Endothelial cell of umbilical vein (primary cell): ENCODE measurements at regions of chr1 and their contacts with region 1.

Region 1: DNA sequence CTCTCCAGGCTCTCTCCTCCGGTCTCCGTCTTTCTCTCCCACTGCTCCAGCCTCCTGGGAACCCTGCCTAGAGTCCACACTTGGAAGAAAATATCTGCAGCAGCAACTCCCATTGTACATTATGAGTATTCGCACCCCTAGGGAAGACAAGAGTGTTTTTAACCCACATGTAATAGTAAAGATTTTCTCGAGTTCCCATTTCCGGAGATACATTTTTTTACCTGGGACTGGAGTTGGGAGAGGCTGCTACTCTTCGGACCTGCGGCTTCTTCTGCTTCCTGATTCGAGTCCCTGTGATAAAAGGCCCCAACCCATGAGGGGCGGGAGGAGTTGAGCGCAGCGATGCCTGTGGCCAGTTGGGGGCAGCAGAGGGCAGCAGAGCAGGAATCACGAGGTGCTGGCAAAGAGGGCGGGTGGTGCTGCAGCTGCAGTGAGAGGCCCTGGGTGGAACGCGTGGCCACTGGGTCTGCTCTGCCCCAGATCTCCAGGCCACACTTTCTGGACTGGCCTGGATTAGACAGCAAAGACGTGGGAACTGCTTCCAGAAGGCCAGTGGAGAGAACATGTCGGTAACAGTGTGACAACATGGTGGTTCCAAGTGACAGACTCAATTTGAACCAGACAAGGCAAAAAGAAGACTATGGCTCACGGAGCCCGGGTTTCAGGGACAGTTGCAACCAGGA is 221.0 kb upstream of the CSF3R start:
- DNase-seq: peak; percentile 73
- H3K4me3 ChIP-seq: no peak overlapping the region
- H3K27ac ChIP-seq: no peak overlapping the region
- H3K4me1 ChIP-seq: no peaks in the 10 kb centered on the region
- H3K27me3 ChIP-seq: no peaks in the 10 kb centered on the region
- CTCF ChIP-seq: peak; percentile 92 to 98
- POLR2A ChIP-seq: no peak

Region 2: DNA sequence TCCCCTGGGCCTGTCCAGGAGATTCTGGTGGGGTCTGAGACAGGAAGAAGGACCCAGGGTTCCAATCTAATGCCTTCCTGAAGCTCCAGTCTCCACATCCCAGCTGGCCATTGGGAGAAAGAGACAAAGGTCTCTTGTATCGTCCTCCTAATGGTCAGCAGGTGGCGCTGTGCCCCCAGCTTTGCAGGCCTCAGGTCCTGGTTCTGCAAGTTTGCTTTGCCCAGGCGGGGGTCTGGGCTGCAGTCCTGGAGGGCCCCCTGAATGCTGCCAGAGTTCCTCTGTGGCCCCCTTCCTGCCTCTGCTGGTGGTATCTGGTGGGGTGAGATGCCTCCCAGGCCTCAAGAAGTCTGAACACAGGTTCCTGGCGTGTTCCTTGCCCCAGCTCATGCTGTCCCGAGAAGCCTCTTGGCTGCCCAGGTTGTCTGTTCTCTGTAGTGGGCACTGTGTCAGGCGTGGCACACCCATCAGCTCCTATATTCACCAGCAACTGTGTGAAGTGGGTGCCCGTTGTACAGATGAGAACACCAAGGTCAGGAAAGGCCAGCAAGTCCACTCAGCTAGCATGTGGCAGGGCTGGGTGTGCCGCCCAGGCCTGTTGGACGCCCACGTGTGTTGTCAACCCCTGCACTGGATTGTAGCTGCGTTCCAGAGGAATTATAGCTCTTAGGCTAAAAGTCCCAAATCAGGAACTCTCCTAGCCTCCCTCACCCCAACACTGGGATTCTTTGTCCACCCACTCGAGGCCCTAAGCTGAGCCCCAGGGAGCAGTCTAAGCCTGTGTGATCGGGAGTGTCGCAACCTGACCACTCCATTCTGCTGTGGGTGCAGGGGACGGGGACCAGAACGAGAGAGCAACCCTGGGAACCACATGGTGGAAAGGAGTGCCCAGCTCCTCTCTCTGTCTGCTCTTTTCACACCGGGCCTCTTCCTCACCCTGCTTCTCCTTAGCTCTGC is 187.0 kb before region 1 on chr1:
- CTCF ChIA-PET with region 1: no interaction called
- POLR2A ChIA-PET with region 1: no interaction called
- dilution Hi-C with region 1: no loop called
- intact Hi-C with region 1: loop called (anchors 5 kb)
- DNase-seq: peak; percentile 43
- H3K4me3 ChIP-seq: no peak overlapping the region
- H3K27ac ChIP-seq: no peak overlapping the region
- H3K4me1 ChIP-seq: no peaks in the 10 kb centered on the region
- H3K27me3 ChIP-seq: peaks cover 0 to 1% of the 10 kb centered on the region in 2 experiments
- CTCF ChIP-seq: peak; percentile 85 to 90
- POLR2A ChIP-seq: no peak

Region 3: DNA sequence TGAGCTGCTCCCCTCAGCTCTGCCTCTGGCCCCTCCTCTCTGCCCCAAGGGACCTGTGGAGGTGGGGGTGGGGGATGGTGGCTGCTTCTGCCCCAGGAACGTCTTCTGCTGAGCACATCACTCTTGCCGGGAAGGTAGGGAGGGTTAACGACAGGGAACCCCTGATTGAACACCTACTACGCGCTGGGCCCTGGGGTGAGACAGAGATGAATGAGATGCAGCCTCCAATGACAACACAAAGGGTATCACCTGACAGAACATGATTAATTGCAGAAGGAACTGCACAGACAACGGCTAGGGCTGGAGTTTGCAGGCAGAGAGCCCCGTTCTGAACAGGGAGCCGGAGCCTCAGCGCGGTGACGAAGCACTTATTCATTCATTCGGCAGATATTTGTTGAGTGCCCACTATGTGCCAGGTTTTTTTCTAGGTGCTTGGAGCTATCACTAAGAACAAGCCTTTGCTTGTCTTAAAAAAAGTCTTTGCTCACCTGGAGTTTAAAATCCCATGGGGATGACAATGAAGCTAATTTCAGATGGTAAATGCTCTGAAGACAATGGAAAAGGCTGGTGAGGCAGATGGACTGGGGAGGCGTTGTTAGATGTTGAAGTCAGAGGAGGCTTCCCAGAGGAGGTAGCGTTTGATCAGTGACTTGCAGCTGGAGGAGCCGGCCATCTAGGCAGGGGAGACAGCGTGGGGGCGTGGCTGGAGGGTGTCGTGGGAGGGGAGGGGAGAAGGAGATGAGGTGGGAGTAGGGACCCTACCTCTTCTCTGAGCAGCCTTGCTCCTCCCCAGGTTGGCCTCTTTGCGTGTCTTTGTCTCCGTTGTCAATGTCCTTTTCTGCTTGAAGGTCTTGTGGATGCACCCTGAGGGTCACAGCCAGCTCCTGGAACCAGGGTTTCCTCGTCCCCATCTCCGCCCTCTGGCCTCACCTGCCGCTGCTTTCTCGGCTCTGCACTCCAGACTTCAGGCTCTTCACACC is 117.8 kb before region 1 on chr1:
- CTCF ChIA-PET with region 1: no interaction called
- POLR2A ChIA-PET with region 1: no interaction called
- dilution Hi-C with region 1: no loop called
- intact Hi-C with region 1: no loop called
- DNase-seq: no peak
- H3K4me3 ChIP-seq: no peak overlapping the region
- H3K27ac ChIP-seq: no peak overlapping the region
- H3K4me1 ChIP-seq: no peaks in the 10 kb centered on the region
- H3K27me3 ChIP-seq: peaks cover 0 to 6% of the 10 kb centered on the region in 2 experiments
- CTCF ChIP-seq: no peak
- POLR2A ChIP-seq: no peak

Region 4: DNA sequence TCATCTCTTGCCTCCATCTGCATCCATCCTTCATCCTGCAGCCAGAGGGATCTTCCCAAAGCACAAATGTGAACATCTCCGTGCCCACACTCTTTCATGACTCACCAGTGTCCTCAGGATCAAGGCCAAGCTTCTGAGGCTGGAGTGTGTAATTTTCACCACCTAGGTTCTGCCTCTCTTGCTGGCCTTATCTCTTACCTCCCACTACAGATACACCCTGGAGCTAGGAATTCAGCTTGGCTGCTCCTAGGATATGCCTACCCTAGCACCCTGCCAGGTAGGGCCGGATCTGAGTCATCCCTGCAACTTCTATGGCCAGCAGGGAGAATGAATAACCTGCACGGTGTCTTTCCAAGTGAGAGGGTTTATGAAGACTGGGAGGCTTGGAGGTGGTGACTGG is 12.3 kb before region 1 on chr1:
- CTCF ChIA-PET with region 1: no interaction called
- POLR2A ChIA-PET with region 1: no interaction called
- dilution Hi-C with region 1: no loop called
- intact Hi-C with region 1: no loop called
- DNase-seq: no peak
- H3K4me3 ChIP-seq: no peak overlapping the region
- H3K27ac ChIP-seq: no peak overlapping the region
- H3K4me1 ChIP-seq: no peaks in the 10 kb centered on the region
- H3K27me3 ChIP-seq: no peaks in the 10 kb centered on the region
- CTCF ChIP-seq: no peak
- POLR2A ChIP-seq: no peak

Region 5: DNA sequence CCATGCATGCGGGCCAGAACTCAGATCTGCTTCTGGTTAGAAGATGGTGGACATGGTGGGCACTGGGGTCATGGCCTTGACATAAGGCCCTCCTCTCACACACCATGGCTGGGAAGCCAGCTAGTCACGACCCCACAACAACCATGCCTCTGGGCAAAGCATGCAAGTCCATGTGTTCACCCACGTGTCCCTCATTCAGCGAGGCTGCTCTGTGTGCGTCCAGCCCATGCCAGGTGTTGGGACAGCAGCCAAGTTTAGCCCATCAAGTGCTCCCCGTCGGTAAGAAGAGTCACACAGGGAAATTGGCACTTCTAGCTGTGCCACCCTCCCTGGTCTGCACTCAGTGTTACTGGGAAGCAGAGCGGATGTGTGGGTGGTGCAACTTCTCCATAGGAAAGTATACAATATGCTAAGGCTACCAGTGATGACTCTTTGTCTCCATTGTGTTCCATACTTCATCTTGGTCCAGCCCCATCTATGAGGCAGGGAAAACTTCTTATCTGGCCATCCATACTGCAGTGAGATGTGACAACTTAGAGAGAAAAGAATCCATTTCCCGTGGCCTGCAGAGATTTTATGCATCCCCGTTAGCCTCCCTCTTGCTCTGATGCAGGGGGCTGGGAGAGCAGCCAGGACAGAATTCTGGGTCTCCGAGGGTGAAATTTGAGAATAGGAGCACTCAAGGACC is 132.7 kb after region 1 on chr1:
- CTCF ChIA-PET with region 1: no interaction called
- POLR2A ChIA-PET with region 1: no interaction called
- dilution Hi-C with region 1: no loop called
- intact Hi-C with region 1: no loop called
- DNase-seq: no peak
- H3K4me3 ChIP-seq: no peak overlapping the region
- H3K27ac ChIP-seq: no peak overlapping the region
- H3K4me1 ChIP-seq: no peaks in the 10 kb centered on the region
- H3K27me3 ChIP-seq: no peaks in the 10 kb centered on the region
- CTCF ChIP-seq: no peak
- POLR2A ChIP-seq: no peak

Region 6: GRCh38 chr1:36864182-36864822 is 160.6 kb after region 1 on chr1:
- CTCF ChIA-PET with region 1: no interaction called
- POLR2A ChIA-PET with region 1: no interaction called
- dilution Hi-C with region 1: no loop called
- intact Hi-C with region 1: loop called (anchors 10 kb)
- DNase-seq: no peak
- H3K4me3 ChIP-seq: no peak overlapping the region
- H3K27ac ChIP-seq: no peak overlapping the region
- H3K4me1 ChIP-seq: no peaks in the 10 kb centered on the region
- H3K27me3 ChIP-seq: no peaks in the 10 kb centered on the region
- CTCF ChIP-seq: peak; percentile 24 to 33
- POLR2A ChIP-seq: no peak

Region 7: DNA sequence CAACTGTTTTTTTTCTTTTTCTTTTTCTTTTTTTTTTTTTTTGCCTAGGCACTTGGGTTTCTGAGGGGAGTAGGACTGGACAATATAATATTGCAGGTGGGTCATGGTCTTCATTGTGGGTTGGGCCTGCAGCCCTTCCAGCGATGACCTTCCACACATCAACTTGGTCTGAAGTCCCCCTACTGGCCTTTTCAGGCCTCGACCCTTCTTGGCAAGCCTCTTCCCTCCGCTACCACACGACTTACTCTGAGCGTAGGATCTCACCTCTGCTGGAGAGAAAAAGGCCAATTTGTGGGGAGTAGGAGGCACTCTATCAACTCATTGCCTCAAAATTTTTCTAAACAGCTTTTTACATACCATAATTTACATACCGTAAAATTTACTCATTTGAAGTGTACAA is 381.7 kb after region 1 on chr1:
- CTCF ChIA-PET with region 1: no interaction called
- POLR2A ChIA-PET with region 1: no interaction called
- dilution Hi-C with region 1: no loop called
- intact Hi-C with region 1: loop called (anchors 1 kb)
- DNase-seq: no peak
- H3K4me3 ChIP-seq: no peak overlapping the region
- H3K27ac ChIP-seq: no peak overlapping the region
- H3K4me1 ChIP-seq: no peaks in the 10 kb centered on the region
- H3K27me3 ChIP-seq: no peaks in the 10 kb centered on the region
- CTCF ChIP-seq: peak in 1 of 2 donors; percentile 21
- POLR2A ChIP-seq: no peak

Region 8: GRCh38 chr1:37323486-37324377 is 620.1 kb after region 1 on chr1:
- CTCF ChIA-PET with region 1: interaction called, 7 read pairs
- POLR2A ChIA-PET with region 1: no interaction called
- dilution Hi-C with region 1: no loop called
- intact Hi-C with region 1: loop called (anchors 1 kb)
- DNase-seq: peak; percentile 32
- H3K4me3 ChIP-seq: no peak overlapping the region
- H3K27ac ChIP-seq: no peak overlapping the region
- H3K4me1 ChIP-seq: no peaks in the 10 kb centered on the region
- H3K27me3 ChIP-seq: peaks cover 0 to 3% of the 10 kb centered on the region in 2 experiments
- CTCF ChIP-seq: peak; percentile 67 to 75
- POLR2A ChIP-seq: no peak